GM12878 (cell line): ENCODE measurements at regions of chr5 and their contacts with region 1.

Region 1: DNA sequence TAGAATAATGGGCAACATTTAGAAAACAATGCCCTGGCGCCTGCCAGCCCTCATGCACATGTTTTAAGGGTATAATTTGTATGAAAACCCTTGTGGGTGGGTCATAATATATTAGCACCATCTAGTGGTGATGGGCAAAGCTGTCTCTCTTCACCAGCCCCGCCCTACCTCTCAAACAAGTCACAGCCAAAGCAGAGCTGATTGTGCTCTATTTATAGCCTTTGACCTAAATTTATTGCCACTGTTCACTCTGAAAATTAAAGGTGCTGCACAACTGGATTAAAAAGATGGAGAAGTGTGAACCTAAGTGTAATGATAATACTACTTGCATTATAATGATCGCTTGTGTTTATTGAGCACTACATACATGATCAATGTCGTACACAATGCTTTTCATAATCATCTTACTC is 131.9 kb upstream of the ANKH start:
- DNase-seq: peak; percentile 13
- ATAC-seq: peak; percentile 99
- H3K4me3 ChIP-seq: no peak overlapping the region
- H3K27ac ChIP-seq: no peak overlapping the region
- H3K4me1 ChIP-seq: no peaks in the 10 kb centered on the region
- H3K27me3 ChIP-seq: no peaks in the 10 kb centered on the region
- CTCF ChIP-seq: peak; percentile 72 to 88 (median 76); a peak in 5 of 6 replicates
- EP300 ChIP-seq: no peak
- POLR2A ChIP-seq: no peak
- RAD21 ChIP-seq: peak; percentile 84

Region 2: DNA sequence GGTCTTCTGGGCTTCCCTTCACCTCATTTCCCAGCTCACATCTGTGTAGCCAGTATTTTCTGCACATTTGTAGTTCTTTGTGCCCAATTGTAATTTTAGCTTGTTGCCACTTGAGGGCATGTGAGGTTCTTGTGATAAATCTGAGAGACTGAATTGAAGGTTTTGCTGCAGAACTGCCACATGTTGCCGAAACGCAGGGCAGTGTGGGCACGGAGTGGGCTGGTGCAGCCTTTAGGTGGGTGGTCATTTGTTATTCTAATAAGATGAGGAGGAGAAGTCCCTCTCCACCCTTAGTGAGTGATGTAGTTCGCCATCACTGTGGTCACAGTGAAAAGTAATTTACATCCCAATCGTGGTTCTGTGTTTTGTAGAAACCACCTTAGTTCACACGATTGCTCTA is 317.8 kb before region 1 on chr5:
- CTCF ChIA-PET with region 1: interaction called, 28 read pairs
- POLR2A ChIA-PET with region 1: no interaction called
- RAD21 ChIA-PET with region 1: interaction called, 10 read pairs
- SMC1A ChIA-PET with region 1: interaction called, 6 read pairs
- in situ Hi-C with region 1: no loop called
- intact Hi-C with region 1: loop called (anchors 2 kb)
- DNase-seq: peak; percentile 68
- ATAC-seq: peak; percentile 96
- H3K4me3 ChIP-seq: no peak overlapping the region
- H3K27ac ChIP-seq: no peak overlapping the region
- H3K4me1 ChIP-seq: no peaks in the 10 kb centered on the region
- H3K27me3 ChIP-seq: no peaks in the 10 kb centered on the region
- CTCF ChIP-seq: peak; percentile 64 to 74 (median 71); a peak in 5 of 6 replicates
- EP300 ChIP-seq: no peak
- POLR2A ChIP-seq: no peak
- RAD21 ChIP-seq: peak; percentile 72

Region 3: DNA sequence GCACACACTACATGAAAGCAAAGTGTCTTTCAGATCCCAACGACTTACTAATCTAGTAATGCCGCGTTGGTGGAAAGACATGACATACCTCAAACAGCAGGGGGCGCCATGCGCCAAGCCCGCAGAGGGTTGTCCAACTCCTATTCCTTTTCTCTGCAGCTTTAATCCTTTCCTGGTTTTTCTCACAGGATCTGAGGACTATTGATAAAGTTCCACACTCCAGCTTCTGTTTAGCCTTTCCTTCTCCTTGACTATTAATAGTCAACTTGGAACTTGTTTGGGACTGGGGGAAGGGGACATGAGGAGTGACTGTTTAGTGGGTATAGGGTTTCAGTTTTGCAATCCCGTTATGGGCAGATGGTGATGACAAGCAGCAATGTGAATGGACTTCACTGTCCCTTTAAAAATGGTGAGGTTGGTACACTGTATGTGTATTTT is 276.1 kb before region 1 on chr5:
- CTCF ChIA-PET with region 1: interaction called, 213 read pairs
- POLR2A ChIA-PET with region 1: interaction called, 6 read pairs
- RAD21 ChIA-PET with region 1: interaction called, 65 read pairs
- SMC1A ChIA-PET with region 1: interaction called, 90 read pairs
- in situ Hi-C with region 1: loop called (anchors 5 kb)
- intact Hi-C with region 1: loop called (anchors 1 kb)
- DNase-seq: no peak
- ATAC-seq: peak; percentile 90
- H3K4me3 ChIP-seq: no peak overlapping the region
- H3K27ac ChIP-seq: no peak overlapping the region
- H3K4me1 ChIP-seq: no peaks in the 10 kb centered on the region
- H3K27me3 ChIP-seq: no peaks in the 10 kb centered on the region
- CTCF ChIP-seq: peak; percentile 88 to 95 (median 94)
- EP300 ChIP-seq: no peak
- POLR2A ChIP-seq: no peak
- RAD21 ChIP-seq: peak; percentile 98

Region 4: GRCh38 chr5:14871210-14872069 is 132.1 kb before region 1 on chr5 and contains the start of gene ANKH:
- CTCF ChIA-PET with region 1: interaction called, 3 read pairs
- POLR2A ChIA-PET with region 1: no interaction called
- RAD21 ChIA-PET with region 1: interaction called, 5 read pairs
- SMC1A ChIA-PET with region 1: interaction called, 7 read pairs
- in situ Hi-C with region 1: no loop called
- intact Hi-C with region 1: loop called (anchors 5 kb)
- DNase-seq: no peak
- ATAC-seq: peak; percentile 86
- H3K4me3 ChIP-seq: peak within 1 kb of the TSS; percentile 77
- H3K27ac ChIP-seq: no peak within 1 kb of the TSS; the same call in 1 of the 2 replicates
- H3K4me1 ChIP-seq: no peaks in the 10 kb centered on the region
- H3K27me3 ChIP-seq: no peaks in the 10 kb centered on the region
- CTCF ChIP-seq: peak in 2 of 3 experiments; percentile 38 to 57; a peak in 3 of 6 replicates
- EP300 ChIP-seq: no peak
- POLR2A ChIP-seq: peak; percentile 32; the same call in 1 of the 2 replicates
- RAD21 ChIP-seq: peak; percentile 42
- polyA plus RNA-seq, gene ANKH: 3.8 to 5.1 TPM

Region 5: GRCh38 chr5:15013654-15014463 is 10.3 kb after region 1 on chr5:
- CTCF ChIA-PET with region 1: interaction called, 12 read pairs
- POLR2A ChIA-PET with region 1: no interaction called
- RAD21 ChIA-PET with region 1: no interaction called
- SMC1A ChIA-PET with region 1: no interaction called
- in situ Hi-C with region 1: no loop called
- intact Hi-C with region 1: no loop called
- DNase-seq: no peak
- ATAC-seq: peak; percentile 91
- H3K4me3 ChIP-seq: no peak overlapping the region
- H3K27ac ChIP-seq: no peak overlapping the region
- H3K4me1 ChIP-seq: no peaks in the 10 kb centered on the region
- H3K27me3 ChIP-seq: no peaks in the 10 kb centered on the region
- CTCF ChIP-seq: peak; percentile 36 to 64 (median 51); a peak in 5 of 6 replicates
- EP300 ChIP-seq: no peak
- POLR2A ChIP-seq: no peak
- RAD21 ChIP-seq: peak; percentile 64

Region 6: DNA sequence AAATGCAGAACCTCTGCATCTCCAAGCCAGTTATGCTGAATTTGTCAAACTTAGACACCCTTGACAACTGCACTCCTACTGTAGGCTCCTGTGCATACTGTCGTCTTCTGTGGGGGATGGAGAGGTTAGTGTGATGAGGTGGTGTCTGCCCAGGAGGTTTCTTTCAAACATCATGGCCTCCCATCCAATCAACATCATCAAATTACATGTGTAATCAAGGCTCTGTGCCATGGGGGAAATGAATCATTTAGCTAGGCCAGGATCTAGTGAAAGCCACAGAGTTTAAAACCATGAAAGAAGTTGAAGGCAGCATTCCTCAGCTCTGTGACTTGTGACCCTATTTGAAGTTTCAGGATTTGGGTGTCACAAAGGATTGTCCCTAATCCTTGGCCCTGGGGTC is 935.4 kb after region 1 on chr5:
- CTCF ChIA-PET with region 1: no interaction called
- POLR2A ChIA-PET with region 1: no interaction called
- RAD21 ChIA-PET with region 1: no interaction called
- SMC1A ChIA-PET with region 1: no interaction called
- in situ Hi-C with region 1: no loop called
- intact Hi-C with region 1: no loop called
- DNase-seq: no peak
- ATAC-seq: no peak
- H3K4me3 ChIP-seq: no peak overlapping the region
- H3K27ac ChIP-seq: no peak overlapping the region
- H3K4me1 ChIP-seq: no peaks in the 10 kb centered on the region
- H3K27me3 ChIP-seq: no peaks in the 10 kb centered on the region
- CTCF ChIP-seq: no peak
- EP300 ChIP-seq: no peak
- POLR2A ChIP-seq: no peak
- RAD21 ChIP-seq: no peak